ENCODE measurements at regions of chr17 and their contacts with region 1.

Region 1: DNA sequence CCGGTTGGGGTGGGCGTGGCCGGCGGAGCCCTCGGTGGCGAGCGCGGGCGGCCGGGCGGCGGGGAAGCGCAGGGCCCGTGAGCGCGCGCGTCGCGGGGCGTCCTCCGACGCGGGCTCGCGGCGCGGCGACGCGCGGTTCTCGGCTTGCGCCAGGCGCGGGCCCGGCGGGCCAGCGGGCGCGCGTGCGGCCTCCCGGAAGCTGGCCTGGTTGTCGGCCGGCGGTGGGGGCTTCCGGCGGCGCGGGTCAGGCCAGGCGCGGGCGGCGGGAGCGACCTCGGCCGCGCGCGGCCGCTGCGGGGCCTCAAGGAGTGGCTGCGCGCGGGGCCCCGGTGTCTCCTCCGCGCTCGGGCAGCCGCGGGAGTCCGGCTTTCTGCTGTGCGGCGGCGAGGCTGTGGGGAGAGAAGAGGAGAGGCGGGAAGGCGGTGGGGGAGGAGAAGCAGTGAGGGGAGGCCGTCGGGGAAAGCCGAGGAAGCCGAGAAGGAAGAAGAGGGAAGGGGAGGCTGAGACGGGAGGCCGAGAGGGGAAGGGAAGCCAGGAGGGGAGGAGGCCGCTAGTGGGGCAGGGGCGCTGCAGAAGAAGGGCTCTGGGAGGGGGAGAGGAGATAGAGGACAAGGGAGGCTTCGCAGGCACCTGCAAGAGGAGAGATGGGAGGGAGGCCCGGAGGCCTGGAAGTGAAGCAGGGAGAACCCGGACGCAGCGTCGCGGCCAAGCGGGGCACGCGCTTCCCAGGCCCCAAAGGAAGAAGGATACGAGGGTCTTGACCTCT is 2.5 kb downstream of the C17orf58 start:
- H3K4me3 Mint-ChIP-seq: peak overlapping the region; percentile 82
- H3K27ac Mint-ChIP-seq: peak overlapping the region; percentile 89
- H3K4me1 Mint-ChIP-seq: peaks cover 42% of the 10 kb centered on the region
- H3K27me3 Mint-ChIP-seq: peaks cover 32% of the 10 kb centered on the region

Region 2: DNA sequence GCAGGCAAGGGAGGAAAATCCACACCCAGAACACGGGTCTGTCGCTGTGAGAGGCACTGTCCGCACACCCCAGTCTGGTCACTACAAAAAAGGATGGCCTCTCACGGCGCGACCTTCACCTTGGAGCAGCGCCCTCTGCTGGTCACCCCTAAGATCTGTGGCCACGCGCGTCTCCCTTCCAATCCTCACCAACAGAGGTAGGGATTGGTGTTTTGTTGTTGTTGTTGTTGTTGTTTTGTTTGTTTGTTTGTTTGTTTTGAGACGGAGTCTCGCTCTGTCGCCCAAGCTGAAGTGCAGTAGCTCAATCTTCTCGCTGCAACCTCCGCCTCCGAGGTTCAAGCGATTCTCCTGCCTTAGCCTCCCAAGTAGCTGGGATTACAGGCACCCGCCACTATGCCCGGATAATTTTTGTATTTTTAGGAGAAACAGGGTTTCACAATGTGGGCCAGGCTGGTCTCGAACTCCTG is 17.5 kb after region 1 on chr17:
- intact Hi-C with region 1: loop called (anchors 2 kb)
- H3K4me3 Mint-ChIP-seq: peak overlapping the region; percentile 52
- H3K27ac Mint-ChIP-seq: peak overlapping the region; percentile 23
- H3K4me1 Mint-ChIP-seq: peaks cover 11% of the 10 kb centered on the region
- H3K27me3 Mint-ChIP-seq: peaks cover 4% of the 10 kb centered on the region

Region 3: DNA sequence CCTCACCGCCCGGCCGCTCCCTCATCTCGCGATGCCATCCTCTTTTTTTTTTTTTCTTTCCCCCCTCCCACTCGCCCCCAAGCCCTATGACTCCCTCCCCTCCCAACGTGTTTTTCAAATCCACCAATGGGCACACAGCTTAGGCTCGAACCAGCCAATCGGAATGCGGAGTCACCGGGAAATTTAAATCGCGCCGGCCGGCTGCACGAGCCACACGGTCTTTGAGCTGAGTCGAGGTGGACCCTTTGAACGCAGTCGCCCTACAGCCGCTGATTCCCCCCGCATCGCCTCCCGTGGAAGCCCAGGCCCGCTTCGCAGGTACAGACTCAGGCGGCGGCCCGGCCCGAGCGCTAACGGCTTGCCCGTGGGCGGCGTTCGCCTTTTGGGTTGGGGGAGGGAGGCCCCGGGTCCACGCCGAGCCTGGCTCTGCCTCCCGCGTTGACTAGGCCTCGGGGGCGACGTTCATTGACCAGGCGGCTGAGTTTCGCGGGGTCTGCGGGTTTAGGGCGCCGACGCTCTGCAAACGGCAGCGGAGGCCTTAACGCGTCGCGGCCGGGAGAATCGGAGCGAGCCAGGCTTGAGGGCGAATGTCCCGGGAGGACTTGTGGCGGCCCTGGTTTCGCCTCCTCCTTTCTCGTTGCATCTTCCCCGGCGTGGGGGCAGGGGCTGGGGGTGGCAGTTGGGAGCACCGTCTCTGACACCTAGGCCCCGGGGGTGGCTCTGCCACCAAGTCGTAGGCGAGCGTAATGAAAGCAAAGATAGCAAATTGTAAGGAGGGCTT is 41.9 kb after region 1 on chr17 and contains the start of gene KPNA2:
- intact Hi-C with region 1: no loop called
- H3K4me3 Mint-ChIP-seq: peak within 1 kb of the TSS; percentile 93
- H3K27ac Mint-ChIP-seq: peak within 1 kb of the TSS; percentile 87
- H3K4me1 Mint-ChIP-seq: peaks cover 16% of the 10 kb centered on the region
- H3K27me3 Mint-ChIP-seq: no peaks in the 10 kb centered on the region